ENCODE measurements at regions of chr11 and their contacts with region 1.

Region 1: GRCh38 chr11:22130462-22131053 is 62.3 kb upstream of the ANO5 start:
- H3K4me3 Mint-ChIP-seq: no peak overlapping the region
- H3K27ac Mint-ChIP-seq: no peak overlapping the region
- H3K4me1 Mint-ChIP-seq: peaks cover 26% of the 10 kb centered on the region
- H3K27me3 Mint-ChIP-seq: peaks cover 18% of the 10 kb centered on the region

Region 2: GRCh38 chr11:21485006-21485405 is 645.6 kb before region 1 on chr11:
- intact Hi-C with region 1: loop called (anchors 10 kb)
- H3K4me3 Mint-ChIP-seq: no peak overlapping the region
- H3K27ac Mint-ChIP-seq: no peak overlapping the region
- H3K4me1 Mint-ChIP-seq: peaks cover 16% of the 10 kb centered on the region
- H3K27me3 Mint-ChIP-seq: peaks cover 2% of the 10 kb centered on the region

Region 3: GRCh38 chr11:21635394-21636145 is 495.0 kb before region 1 on chr11:
- intact Hi-C with region 1: loop called (anchors 10 kb)
- H3K4me3 Mint-ChIP-seq: peak overlapping the region; percentile 47
- H3K27ac Mint-ChIP-seq: peak overlapping the region; percentile 82
- H3K4me1 Mint-ChIP-seq: peaks cover 20% of the 10 kb centered on the region
- H3K27me3 Mint-ChIP-seq: no peaks in the 10 kb centered on the region

Region 4: DNA sequence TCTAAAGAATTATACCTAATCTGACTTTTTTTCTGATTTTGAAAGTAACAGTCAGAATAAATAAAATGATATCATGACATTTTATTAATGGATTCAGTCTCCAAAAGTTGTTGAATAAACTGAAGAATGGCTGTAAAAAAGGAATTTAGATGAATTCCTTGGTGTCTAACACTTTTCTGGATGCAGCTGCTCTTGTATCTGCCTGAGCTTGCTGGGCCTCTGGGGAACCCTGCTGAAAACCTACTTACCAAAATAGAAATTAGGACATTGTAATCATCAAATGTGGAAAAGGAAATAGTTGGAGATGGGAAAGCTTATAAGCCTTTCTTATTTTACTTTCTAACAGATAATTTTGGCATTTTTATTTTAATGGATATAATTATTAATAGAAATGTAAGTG is 253.4 kb before region 1 on chr11:
- intact Hi-C with region 1: loop called (anchors 10 kb)
- H3K4me3 Mint-ChIP-seq: no peak overlapping the region
- H3K27ac Mint-ChIP-seq: no peak overlapping the region
- H3K4me1 Mint-ChIP-seq: peaks cover 5% of the 10 kb centered on the region
- H3K27me3 Mint-ChIP-seq: no peaks in the 10 kb centered on the region

Region 5: DNA sequence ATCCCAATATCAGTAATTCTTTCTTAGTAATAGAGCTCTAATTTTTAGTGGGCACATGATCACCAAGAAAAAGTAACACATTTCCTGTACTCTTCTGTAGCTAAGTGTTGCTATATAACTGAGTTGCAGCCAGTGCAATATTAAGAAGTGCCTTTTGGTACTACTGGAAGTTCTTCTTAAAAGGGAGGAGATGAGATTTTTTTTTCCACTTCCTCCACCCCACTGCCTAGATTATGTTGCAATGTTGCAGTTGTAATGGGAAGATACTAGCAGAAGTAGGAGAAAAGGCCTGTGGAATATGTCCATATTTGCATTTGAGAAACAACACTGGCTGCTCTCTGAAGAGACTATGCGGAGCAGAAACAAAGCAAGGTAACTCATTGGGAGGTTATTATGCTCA is 218.3 kb before region 1 on chr11:
- intact Hi-C with region 1: no loop called
- H3K4me3 Mint-ChIP-seq: no peak overlapping the region
- H3K27ac Mint-ChIP-seq: no peak overlapping the region
- H3K4me1 Mint-ChIP-seq: peaks cover 35% of the 10 kb centered on the region
- H3K27me3 Mint-ChIP-seq: no peaks in the 10 kb centered on the region

Region 6: DNA sequence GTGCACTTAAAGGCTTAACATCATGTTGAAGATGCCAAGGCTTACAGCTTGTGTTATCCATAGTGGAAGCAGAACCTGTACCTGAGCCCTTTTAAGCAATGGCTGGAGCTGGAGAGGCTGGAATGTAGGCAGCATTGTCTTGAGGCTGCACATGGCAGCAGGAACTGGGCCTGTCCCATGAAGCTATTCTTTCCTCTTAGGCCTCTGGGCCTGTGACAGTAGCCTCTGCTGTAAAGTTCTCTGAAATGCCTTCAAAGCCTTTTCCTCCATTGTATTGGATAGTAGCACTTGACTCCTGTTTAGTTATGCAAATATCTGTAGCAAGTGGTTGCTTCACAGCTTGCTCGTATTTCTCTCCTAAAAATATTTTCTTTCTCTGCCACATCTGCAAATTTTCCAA is 65.1 kb before region 1 on chr11:
- intact Hi-C with region 1: no loop called
- H3K4me3 Mint-ChIP-seq: no peak overlapping the region
- H3K27ac Mint-ChIP-seq: no peak overlapping the region
- H3K4me1 Mint-ChIP-seq: no peaks in the 10 kb centered on the region
- H3K27me3 Mint-ChIP-seq: no peaks in the 10 kb centered on the region

Region 7: GRCh38 chr11:22577854-22578253 is 447.3 kb after region 1 on chr11:
- intact Hi-C with region 1: no loop called
- H3K4me3 Mint-ChIP-seq: no peak overlapping the region
- H3K27ac Mint-ChIP-seq: no peak overlapping the region
- H3K4me1 Mint-ChIP-seq: no peaks in the 10 kb centered on the region
- H3K27me3 Mint-ChIP-seq: no peaks in the 10 kb centered on the region

Measured in dendritic cell treated with granulocyte-macrophage colony-stimulating factor and Interleukin-4, amounts not matched to agents 40 ng/mL and 50 ng/mL, for 4 days (primary cell).